ENCODE measurements at regions of chr13 and their contacts with region 1.

Region 1: GRCh38 chr13:106343836-106344235 is 191.6 kb downstream of the EFNB2 start:
- DNase-seq: no peak
- ATAC-seq: peak; percentile 44
- H3K4me3 ChIP-seq: no peak overlapping the region
- H3K27ac ChIP-seq: no peak overlapping the region
- H3K4me1 ChIP-seq: no peaks in the 10 kb centered on the region; the same call in 1 of the 2 replicates
- H3K27me3 ChIP-seq: no peaks in the 10 kb centered on the region; a peak in 1 of 4 replicates
- CTCF ChIP-seq: no peak
- EP300 ChIP-seq: no peak
- POLR2A ChIP-seq: no peak
- RAD21 ChIP-seq: no peak

Region 2: DNA sequence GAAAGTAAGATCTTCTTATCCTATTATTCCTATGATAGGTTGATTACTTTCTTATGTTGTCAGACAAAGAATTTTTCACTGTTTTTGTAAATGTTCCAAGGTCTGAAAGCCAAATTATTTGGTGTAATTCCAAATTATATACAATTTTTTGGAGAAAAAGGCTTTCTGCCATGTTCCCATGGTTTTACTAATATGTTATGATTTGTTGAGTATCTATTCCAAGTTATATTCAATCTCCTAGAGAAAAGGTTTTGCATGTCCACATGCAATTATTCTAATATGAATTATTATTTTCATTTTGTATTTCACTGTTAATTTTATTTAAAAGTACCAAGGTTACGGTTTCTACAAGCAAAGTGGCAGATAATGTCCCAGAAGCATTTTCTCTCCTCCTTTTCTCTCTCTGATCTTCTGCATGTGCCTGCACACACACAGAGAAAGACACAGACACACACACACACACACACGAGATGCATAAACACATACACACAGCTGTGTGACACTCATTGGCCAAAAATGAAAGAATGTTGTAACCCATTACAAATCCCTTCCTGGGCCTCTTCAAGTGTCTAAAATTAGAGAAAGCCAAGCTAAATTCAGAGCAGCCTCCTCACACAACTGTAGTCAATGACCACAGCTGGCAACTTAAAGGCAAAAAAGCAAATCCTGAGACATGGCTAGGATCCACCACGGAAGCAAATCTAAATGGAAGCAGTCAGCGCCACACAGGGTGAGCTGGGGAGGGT is 429.4 kb before region 1 on chr13:
- CTCF ChIA-PET with region 1: no interaction called
- POLR2A ChIA-PET with region 1: no interaction called
- RAD21 ChIA-PET with region 1: no interaction called
- SMC1A ChIA-PET with region 1: no interaction called
- in situ Hi-C with region 1: no loop called
- intact Hi-C with region 1: no loop called
- DNase-seq: no peak
- ATAC-seq: no peak
- H3K4me3 ChIP-seq: no peak overlapping the region
- H3K27ac ChIP-seq: no peak overlapping the region
- H3K4me1 ChIP-seq: no peaks in the 10 kb centered on the region
- H3K27me3 ChIP-seq: no peaks in the 10 kb centered on the region
- CTCF ChIP-seq: no peak
- EP300 ChIP-seq: no peak
- POLR2A ChIP-seq: no peak
- RAD21 ChIP-seq: no peak

Region 3: DNA sequence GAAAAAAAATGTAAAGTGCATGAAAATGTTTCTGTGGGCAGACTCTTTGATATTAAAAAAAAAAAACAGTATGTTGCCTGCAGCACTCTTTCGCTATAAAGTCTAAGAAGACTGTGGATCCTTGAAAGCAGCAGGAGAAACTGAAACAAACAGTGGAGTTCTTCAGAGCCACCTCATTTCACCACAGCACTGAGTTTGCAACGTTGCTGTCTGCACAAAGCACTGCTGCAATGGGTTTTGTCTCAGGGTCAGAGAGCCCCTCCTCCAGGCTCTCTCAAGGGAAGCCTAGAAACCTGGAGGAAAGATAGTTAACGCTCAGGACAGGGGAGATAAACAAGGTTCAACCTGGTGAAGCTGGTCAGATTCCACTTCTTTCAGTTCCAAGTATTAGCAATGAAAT is 57.0 kb before region 1 on chr13:
- CTCF ChIA-PET with region 1: no interaction called
- POLR2A ChIA-PET with region 1: no interaction called
- RAD21 ChIA-PET with region 1: no interaction called
- SMC1A ChIA-PET with region 1: no interaction called
- in situ Hi-C with region 1: no loop called
- intact Hi-C with region 1: no loop called
- DNase-seq: no peak
- ATAC-seq: peak; percentile 87
- H3K4me3 ChIP-seq: no peak overlapping the region
- H3K27ac ChIP-seq: no peak overlapping the region
- H3K4me1 ChIP-seq: no peaks in the 10 kb centered on the region
- H3K27me3 ChIP-seq: no peaks in the 10 kb centered on the region
- CTCF ChIP-seq: no peak
- EP300 ChIP-seq: no peak
- POLR2A ChIP-seq: no peak
- RAD21 ChIP-seq: no peak

Region 4: DNA sequence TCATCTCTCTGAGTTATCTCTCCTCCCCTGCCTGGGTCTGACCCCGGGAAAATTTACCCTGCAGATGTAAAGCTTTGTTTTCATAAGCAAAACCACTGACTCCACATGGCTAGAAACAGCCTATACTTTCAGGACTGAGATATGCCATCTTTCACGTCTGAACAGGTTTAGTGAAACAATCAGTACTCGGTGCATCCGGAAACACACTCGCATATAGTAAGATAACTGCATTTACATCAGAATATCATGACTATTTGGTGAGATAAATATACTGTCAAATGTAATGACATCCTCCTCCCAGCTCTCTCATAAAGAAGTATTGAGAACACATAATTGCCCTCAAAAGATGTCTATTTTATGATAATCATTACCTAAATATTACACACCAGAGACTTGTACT is 18.9 kb after region 1 on chr13:
- CTCF ChIA-PET with region 1: interaction called, 4 read pairs
- POLR2A ChIA-PET with region 1: interaction called, 3 read pairs
- RAD21 ChIA-PET with region 1: interaction called, 6 read pairs
- SMC1A ChIA-PET with region 1: interaction called, 11 read pairs
- in situ Hi-C with region 1: no loop called
- intact Hi-C with region 1: no loop called
- DNase-seq: no peak
- ATAC-seq: peak; percentile 76
- H3K4me3 ChIP-seq: no peak overlapping the region
- H3K27ac ChIP-seq: no peak overlapping the region
- H3K4me1 ChIP-seq: no peaks in the 10 kb centered on the region
- H3K27me3 ChIP-seq: no peaks in the 10 kb centered on the region
- CTCF ChIP-seq: no peak
- EP300 ChIP-seq: no peak
- POLR2A ChIP-seq: no peak
- RAD21 ChIP-seq: no peak

Measured in GM12878 (cell line).